Activated CD4-positive, alpha-beta memory T cell treated with anti-CD3 and anti-CD28 coated beads for 36 hours (primary cell): ENCODE measurements at regions of chr18 and their contacts with region 1.

Region 1: GRCh38 chr18:2994603-2995432 is 18.1 kb downstream of the LPIN2 start:
- DNase-seq: peak; percentile 86
- H3K4me3 Mint-ChIP-seq: peak overlapping the region; percentile 26
- H3K27ac Mint-ChIP-seq: peak overlapping the region; percentile 91
- H3K4me1 Mint-ChIP-seq: peaks cover 83% of the 10 kb centered on the region
- H3K27me3 Mint-ChIP-seq: no peaks in the 10 kb centered on the region

Region 2: DNA sequence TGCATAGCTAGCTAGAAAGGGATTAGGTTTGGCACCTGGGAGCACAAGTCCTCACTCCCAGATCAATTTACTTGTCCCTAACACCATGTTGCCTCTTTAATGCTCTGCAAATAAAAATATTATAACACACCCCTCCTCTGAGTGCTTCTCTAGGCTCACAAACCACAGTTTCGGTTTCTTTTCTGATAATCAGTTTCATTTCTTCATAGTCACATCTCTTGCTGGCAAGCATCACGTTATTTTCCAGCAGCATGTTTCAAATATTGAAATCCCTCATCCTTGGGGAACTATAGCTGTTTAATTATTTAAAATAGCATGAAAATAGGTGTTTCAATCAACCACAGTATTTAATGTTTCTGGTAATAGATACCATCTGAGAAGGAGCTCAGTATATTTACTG is 353.2 kb before region 1 on chr18:
- CTCF ChIA-PET with region 1: no interaction called
- POLR2A ChIA-PET with region 1: no interaction called
- intact Hi-C with region 1: loop called (anchors 5 kb)
- DNase-seq: no peak
- H3K4me3 Mint-ChIP-seq: peak overlapping the region; percentile 57
- H3K27ac Mint-ChIP-seq: peak overlapping the region; percentile 58
- H3K4me1 Mint-ChIP-seq: peaks cover 52% of the 10 kb centered on the region
- H3K27me3 Mint-ChIP-seq: no peaks in the 10 kb centered on the region

Region 3: DNA sequence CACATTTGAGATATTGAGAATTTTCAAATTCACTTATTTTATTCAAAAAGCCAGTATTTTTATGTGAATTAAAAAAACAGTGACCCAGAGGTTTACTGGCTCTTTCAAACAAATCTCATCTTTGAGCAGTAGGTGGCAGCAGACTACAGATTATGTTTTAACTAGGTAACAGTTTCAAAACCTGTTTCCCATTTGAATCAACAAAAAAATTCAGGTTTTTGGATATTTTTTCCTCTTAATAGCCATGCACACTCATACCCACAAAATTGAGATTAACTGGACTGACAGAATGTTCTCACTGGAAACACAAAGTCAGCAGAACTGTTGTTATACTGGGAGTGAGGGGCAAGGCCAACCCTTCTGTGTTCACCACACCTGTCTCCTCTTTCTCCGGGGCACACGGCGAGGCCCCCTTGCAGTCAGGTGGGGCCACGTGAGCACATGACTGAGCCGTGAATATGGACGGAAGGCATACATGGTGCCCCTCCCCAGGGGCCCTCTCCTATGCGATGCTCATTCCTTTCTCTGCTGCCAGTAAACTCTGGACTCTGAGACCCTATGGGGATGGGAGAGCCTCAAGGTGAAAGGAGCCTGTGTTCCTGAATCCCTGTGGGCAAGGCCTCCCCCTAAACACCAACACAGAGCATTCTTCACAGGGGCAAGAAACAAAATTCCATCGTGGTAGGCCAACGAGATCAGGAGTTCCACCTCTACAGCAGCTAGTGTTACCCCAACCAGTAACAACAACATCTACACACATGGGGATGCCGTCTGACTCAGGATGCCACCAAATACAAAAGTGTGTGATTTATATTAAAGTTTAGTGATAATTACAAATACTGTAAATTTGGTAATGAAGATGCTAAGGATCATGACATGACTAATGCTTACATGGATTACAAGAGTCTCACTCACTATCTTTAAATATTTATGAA is 62.3 kb before region 1 on chr18:
- CTCF ChIA-PET with region 1: interaction called, 185 read pairs
- POLR2A ChIA-PET with region 1: interaction called, 3 read pairs
- intact Hi-C with region 1: loop called (anchors 2 kb)
- DNase-seq: no peak
- H3K4me3 Mint-ChIP-seq: peak overlapping the region; percentile 18
- H3K27ac Mint-ChIP-seq: peak overlapping the region; percentile 89
- H3K4me1 Mint-ChIP-seq: peaks cover 45% of the 10 kb centered on the region
- H3K27me3 Mint-ChIP-seq: no peaks in the 10 kb centered on the region

Region 4: GRCh38 chr18:2978646-2979045 is 16.2 kb before region 1 on chr18:
- CTCF ChIA-PET with region 1: interaction called, 61 read pairs
- POLR2A ChIA-PET with region 1: interaction called, 10 read pairs
- intact Hi-C with region 1: loop called (anchors 1 kb)
- DNase-seq: peak; percentile 72
- H3K4me3 Mint-ChIP-seq: peak overlapping the region; percentile 73
- H3K27ac Mint-ChIP-seq: peak overlapping the region; percentile 93
- H3K4me1 Mint-ChIP-seq: peaks cover 85% of the 10 kb centered on the region
- H3K27me3 Mint-ChIP-seq: no peaks in the 10 kb centered on the region

Region 5: GRCh38 chr18:3037423-3037915 is 42.7 kb after region 1 on chr18:
- CTCF ChIA-PET with region 1: no interaction called
- POLR2A ChIA-PET with region 1: no interaction called
- intact Hi-C with region 1: loop called (anchors 1 kb)
- DNase-seq: peak; percentile 45
- H3K4me3 Mint-ChIP-seq: no peak overlapping the region
- H3K27ac Mint-ChIP-seq: no peak overlapping the region
- H3K4me1 Mint-ChIP-seq: peaks cover 19% of the 10 kb centered on the region
- H3K27me3 Mint-ChIP-seq: no peaks in the 10 kb centered on the region

Region 6: DNA sequence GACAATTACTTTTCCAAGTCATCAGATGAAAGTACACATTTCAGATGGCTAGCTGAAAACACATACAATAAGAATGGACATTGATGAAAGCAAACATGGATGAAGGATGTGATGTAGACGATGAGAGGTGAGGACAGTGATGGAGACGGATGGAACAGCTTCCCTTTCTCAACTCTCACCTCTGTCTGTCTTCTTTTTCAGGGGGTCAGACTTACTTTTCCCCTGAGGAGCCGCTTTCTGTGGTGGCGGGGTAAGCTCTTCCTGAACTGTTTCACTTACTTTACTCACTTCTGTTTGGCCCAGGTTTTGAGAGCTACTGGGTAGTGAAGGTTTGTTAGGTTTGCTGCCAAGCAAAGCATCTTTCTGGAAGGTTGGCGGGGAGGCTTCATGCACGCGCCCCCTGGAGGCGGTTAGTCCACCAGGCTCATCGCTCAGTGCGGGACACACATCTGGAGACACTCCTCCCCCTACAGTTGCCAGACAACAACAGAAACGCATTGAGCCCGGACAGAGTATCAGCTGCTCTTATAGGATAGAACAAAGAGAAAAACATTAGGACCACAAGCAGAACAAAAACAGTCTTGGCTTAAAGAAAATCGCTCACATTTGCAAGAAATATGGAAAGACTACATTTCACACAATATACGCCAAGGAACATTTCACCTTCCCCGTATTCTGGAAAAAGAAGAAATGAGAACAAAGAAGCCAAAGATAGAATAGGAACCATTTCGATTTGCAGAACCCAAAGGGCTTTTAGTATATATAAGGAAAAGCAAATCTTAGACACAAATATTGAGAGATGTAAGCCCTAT is 134.4 kb after region 1 on chr18:
- CTCF ChIA-PET with region 1: interaction called, 63 read pairs
- POLR2A ChIA-PET with region 1: no interaction called
- intact Hi-C with region 1: no loop called
- DNase-seq: peak; percentile 90
- H3K4me3 Mint-ChIP-seq: no peak overlapping the region
- H3K27ac Mint-ChIP-seq: no peak overlapping the region
- H3K4me1 Mint-ChIP-seq: peaks cover 13% of the 10 kb centered on the region
- H3K27me3 Mint-ChIP-seq: no peaks in the 10 kb centered on the region

Region 7: GRCh38 chr18:3424280-3424890 is 429.6 kb after region 1 on chr18:
- CTCF ChIA-PET with region 1: no interaction called
- POLR2A ChIA-PET with region 1: no interaction called
- intact Hi-C with region 1: no loop called
- DNase-seq: no peak
- H3K4me3 Mint-ChIP-seq: no peak overlapping the region
- H3K27ac Mint-ChIP-seq: no peak overlapping the region
- H3K4me1 Mint-ChIP-seq: no peaks in the 10 kb centered on the region
- H3K27me3 Mint-ChIP-seq: no peaks in the 10 kb centered on the region